Activated naive CD4-positive, alpha-beta T cell treated with anti-CD3 and anti-CD28 coated beads, Interleukin-2, amount 10 ng/mL, durations not matched to agents 7 days and 5 days (primary cell): ENCODE measurements at regions of chr17 and their contacts with region 1.

Region 1: GRCh38 chr17:28902819-28903545 is at the start of gene DHRS13:
- DNase-seq: peak; percentile 95
- H3K4me3 Mint-ChIP-seq: peak within 1 kb of the TSS; percentile 93
- H3K27ac Mint-ChIP-seq: peak within 1 kb of the TSS; percentile 94
- H3K4me1 Mint-ChIP-seq: peaks cover 47% of the 10 kb centered on the region
- H3K27me3 Mint-ChIP-seq: no peaks in the 10 kb centered on the region

Region 2: DNA sequence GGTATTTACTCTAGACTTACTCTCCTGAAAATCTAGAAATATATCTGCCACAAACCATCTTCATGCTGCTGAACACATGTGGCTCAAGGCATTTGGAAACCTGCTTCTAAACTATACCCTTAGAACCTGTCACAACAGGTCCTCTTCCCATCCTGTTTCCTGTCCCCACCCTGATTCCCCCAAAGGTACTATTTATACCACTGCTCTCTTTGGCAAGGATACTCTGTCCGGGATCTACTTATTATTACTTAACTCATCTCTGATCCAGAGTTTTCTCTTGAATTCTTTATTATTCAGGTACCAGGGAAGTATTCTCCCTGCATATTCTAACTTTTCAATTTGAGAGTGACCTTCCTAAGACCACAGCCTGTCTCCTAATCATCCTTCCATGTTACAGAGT is 125.8 kb before region 1 on chr17:
- CTCF ChIA-PET with region 1: no interaction called
- DNase-seq: no peak
- H3K4me3 Mint-ChIP-seq: no peak overlapping the region
- H3K27ac Mint-ChIP-seq: peak overlapping the region; percentile 38
- H3K4me1 Mint-ChIP-seq: peaks cover 24% of the 10 kb centered on the region
- H3K27me3 Mint-ChIP-seq: no peaks in the 10 kb centered on the region

Region 3: DNA sequence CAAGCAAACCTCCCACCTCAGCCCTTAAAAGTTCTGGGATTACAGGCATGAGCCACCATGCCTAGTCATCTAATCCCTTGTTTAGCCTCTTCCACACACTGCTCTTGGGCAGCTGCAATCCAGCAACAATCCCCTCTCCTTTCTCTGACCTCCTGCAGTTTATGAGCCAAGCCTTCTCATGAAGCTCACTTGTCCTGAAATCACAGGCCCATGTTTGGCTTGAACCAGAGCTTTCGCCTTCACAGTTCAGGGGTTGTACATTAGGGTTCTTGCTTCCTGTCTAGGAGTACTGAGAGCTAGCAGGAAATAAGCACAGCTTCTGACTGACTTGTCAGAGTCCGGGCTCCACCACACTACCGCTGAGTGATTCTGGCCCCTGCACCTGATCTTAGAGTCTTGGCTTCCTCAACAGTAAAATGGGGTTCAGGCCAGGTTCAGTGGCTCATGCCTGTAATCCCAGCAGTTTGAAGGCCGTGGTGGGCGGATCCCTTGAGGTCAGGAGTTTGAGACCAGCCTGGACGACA is 31.9 kb before region 1 on chr17:
- CTCF ChIA-PET with region 1: interaction called, 11 read pairs
- DNase-seq: peak; percentile 71
- H3K4me3 Mint-ChIP-seq: peak overlapping the region; percentile 39
- H3K27ac Mint-ChIP-seq: peak overlapping the region; percentile 97
- H3K4me1 Mint-ChIP-seq: peaks cover 19% of the 10 kb centered on the region
- H3K27me3 Mint-ChIP-seq: no peaks in the 10 kb centered on the region

Region 4: DNA sequence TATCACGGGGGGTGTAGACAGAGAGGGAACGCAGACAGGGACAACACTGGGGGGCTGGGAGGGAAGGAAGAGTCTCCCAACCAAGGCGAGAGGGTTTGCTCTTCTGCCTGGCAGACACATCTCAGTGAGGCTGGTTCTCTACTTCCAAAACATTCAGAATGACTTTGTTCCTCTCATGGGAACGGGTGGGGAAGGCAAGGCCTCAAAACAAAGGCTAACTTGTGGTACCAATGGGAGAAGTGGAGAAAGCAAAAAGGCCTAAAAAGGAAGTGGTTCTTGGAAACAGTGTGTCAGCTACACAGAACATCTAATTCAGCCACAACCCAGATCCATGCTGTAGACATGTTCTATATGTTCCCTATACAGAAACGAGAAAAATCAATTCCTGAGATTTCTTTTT is 13.0 kb before region 1 on chr17:
- CTCF ChIA-PET with region 1: interaction called, 17 read pairs
- DNase-seq: no peak
- H3K4me3 Mint-ChIP-seq: no peak overlapping the region
- H3K27ac Mint-ChIP-seq: peak overlapping the region; percentile 78
- H3K4me1 Mint-ChIP-seq: peaks cover 54% of the 10 kb centered on the region
- H3K27me3 Mint-ChIP-seq: no peaks in the 10 kb centered on the region